ENCODE measurements at regions of chr1 and their contacts with region 1.

Region 1: DNA sequence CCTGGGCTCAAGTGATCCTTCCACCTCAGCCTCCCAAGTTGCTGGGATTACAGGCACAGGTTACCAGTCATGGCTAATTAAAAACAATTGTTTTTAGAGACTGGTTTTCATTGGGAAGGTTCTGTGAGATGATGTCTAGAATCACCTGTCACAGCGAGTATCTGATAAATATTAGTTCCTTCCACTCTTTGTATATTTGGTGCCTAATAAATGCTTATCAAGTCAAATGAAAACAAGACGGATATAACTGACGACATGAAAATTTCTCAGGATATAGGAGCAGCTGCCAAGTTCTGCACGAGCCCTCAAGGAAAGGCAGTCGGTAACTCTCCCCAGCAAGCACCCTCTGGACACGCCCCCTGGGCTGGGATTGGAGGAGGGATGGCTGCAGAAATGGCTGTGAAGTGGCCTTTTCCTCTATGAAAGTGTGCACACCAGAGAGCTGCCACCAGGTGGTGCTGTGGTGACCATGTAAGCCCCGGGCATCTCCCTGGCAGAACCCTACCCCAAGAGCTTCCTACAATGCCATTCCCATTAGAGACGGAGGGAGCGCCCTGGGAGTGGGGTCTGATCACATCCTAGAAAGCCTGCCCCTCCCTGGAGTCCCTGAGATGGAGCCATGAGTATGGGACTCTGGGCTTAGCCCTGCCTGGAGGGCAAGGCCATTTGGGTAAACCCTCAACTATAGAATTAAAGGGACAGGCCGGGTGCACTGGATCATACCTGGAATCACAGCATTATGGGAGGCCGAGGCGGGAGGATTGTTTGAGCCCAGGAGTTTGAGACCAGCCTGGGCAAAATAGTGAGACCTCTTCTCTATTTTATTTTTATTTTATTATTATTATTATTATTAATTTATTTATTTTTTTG is 50.9 kb downstream of the HTR6 start:
- DNase-seq: peak; percentile 69
- H3K4me3 ChIP-seq: no peak overlapping the region
- CTCF ChIP-seq: peak; percentile 95

Region 2: GRCh38 chr1:19698181-19698580 is 17.4 kb before region 1 on chr1:
- CTCF ChIA-PET with region 1: interaction called, 75 read pairs
- POLR2A ChIA-PET with region 1: no interaction called
- DNase-seq: no peak
- H3K4me3 ChIP-seq: no peak overlapping the region
- CTCF ChIP-seq: no peak

Region 3: GRCh38 chr1:19728413-19729145 is 13.0 kb after region 1 on chr1:
- CTCF ChIA-PET with region 1: interaction called, 116 read pairs
- POLR2A ChIA-PET with region 1: no interaction called
- DNase-seq: no peak
- H3K4me3 ChIP-seq: no peak overlapping the region
- CTCF ChIP-seq: no peak

Region 4: GRCh38 chr1:19735440-19736127 is 20.0 kb after region 1 on chr1:
- CTCF ChIA-PET with region 1: interaction called, 116 read pairs
- POLR2A ChIA-PET with region 1: no interaction called
- DNase-seq: peak; percentile 93
- H3K4me3 ChIP-seq: no peak overlapping the region
- CTCF ChIP-seq: no peak

Region 5: GRCh38 chr1:19811206-19811851 is 95.8 kb after region 1 on chr1:
- CTCF ChIA-PET with region 1: interaction called, 26 read pairs
- POLR2A ChIA-PET with region 1: no interaction called
- DNase-seq: no peak
- H3K4me3 ChIP-seq: no peak overlapping the region
- CTCF ChIP-seq: peak; percentile 67

Measured in AG04449 (cell line).